ENCODE measurements at regions of chr7 and their contacts with region 1.

Region 1: GRCh38 chr7:7968543-7969305 is at the start of gene GLCCI1:
- DNase-seq: peak; percentile 99
- H3K4me3 Mint-ChIP-seq: peak within 1 kb of the TSS; percentile 86
- H3K27ac Mint-ChIP-seq: peak within 1 kb of the TSS; percentile 89
- H3K4me1 Mint-ChIP-seq: peaks cover 16% of the 10 kb centered on the region
- H3K27me3 Mint-ChIP-seq: no peaks in the 10 kb centered on the region
- total RNA-seq, gene GLCCI1: 10.1 and 10.9 TPM in 2 replicates

Region 2: DNA sequence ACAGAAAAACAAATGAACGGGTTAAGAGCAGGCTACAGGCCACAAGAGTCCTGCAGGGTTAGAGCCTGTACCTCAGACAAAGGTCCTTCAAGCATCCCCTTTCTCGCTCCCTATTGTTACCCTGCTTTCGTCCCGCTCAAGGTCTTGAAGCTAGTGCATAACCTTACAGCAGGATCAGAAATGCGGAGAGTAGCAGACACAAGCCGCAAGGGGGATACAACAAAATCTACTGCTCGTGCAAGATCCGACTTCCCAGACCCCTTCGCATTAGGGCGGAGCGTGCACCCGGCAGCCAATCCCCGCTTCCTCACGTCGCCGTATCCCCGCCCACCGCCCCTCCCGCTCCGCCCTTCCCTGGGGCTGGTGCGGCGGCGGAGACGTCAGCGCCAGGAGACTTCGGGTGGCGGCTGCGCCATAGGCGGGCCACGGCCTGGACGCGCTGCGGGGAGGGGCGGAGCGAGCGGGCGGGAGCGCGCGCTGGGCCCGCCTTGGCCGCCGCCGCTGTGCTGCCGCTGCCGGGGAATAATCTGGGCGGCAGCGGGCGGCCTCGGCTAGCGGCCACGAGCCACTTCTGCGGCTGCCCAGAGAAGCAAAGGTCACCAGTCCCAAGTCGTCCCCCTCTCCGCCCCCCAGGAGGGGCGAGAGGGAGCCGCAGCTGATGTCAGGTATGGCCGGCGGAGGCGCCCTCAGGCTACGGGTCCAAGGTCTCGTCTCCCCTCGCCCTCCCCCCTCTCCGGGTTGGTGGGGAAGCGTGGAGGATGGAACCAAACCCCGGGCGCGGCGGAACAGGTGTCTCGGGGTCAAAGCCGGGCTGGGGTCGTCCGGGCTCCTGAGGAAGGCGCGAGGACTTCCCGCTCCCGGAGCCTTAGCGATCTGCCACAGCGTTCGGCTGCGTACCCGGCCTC is 786.3 kb before region 1 on chr7 and contains the start of gene C1GALT1:
- intact Hi-C with region 1: loop called (anchors 5 kb)
- DNase-seq: peak; percentile 98
- H3K4me3 Mint-ChIP-seq: peak within 1 kb of the TSS; percentile 96
- H3K27ac Mint-ChIP-seq: peak within 1 kb of the TSS; percentile 99
- H3K4me1 Mint-ChIP-seq: peaks cover 27% of the 10 kb centered on the region
- H3K27me3 Mint-ChIP-seq: no peaks in the 10 kb centered on the region
- total RNA-seq, gene C1GALT1: 37.2 and 39.3 TPM in 2 replicates

Region 3: GRCh38 chr7:7719236-7719635 is 249.5 kb before region 1 on chr7:
- intact Hi-C with region 1: loop called (anchors 1 kb)
- DNase-seq: peak; percentile 84
- H3K4me3 Mint-ChIP-seq: peak overlapping the region; percentile 47
- H3K27ac Mint-ChIP-seq: peak overlapping the region; percentile 73
- H3K4me1 Mint-ChIP-seq: peaks cover 17% of the 10 kb centered on the region
- H3K27me3 Mint-ChIP-seq: no peaks in the 10 kb centered on the region

Region 4: DNA sequence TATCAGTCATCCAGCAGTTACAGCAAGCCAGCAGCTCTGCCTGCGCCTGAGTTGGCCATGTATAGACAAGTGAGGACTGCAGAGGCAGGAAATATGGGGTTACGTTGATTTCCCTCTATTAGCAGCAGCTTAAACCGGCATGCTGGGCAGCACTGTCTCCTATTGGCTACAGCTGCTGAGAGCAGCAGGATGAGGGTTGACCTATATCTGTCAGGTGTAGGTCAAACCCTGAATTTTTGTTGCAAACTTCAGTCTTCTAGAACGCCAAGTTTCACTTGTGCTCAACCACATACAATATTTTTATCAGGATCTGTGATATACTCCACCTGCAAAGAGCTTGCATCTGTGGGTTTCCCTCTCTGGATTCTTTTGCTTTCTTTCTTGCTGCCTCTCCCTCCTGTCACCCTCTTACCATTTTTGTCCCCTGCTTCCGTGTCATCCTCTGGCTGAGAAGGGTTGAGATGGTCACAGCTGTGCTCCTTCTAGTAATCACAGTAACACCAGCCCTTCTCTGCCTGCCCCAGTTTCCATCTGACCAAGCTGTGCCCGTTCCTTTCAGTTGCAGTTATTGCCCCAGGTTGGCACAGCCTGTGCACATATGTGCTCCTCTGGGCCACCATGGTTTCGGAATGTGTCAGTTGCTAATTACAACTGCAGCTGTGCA is 24.0 kb before region 1 on chr7:
- intact Hi-C with region 1: loop called (anchors 2 kb)
- DNase-seq: peak; percentile 80
- H3K4me3 Mint-ChIP-seq: peak overlapping the region; percentile 65
- H3K27ac Mint-ChIP-seq: peak overlapping the region; percentile 49
- H3K4me1 Mint-ChIP-seq: peaks cover 13% of the 10 kb centered on the region
- H3K27me3 Mint-ChIP-seq: no peaks in the 10 kb centered on the region

Region 5: DNA sequence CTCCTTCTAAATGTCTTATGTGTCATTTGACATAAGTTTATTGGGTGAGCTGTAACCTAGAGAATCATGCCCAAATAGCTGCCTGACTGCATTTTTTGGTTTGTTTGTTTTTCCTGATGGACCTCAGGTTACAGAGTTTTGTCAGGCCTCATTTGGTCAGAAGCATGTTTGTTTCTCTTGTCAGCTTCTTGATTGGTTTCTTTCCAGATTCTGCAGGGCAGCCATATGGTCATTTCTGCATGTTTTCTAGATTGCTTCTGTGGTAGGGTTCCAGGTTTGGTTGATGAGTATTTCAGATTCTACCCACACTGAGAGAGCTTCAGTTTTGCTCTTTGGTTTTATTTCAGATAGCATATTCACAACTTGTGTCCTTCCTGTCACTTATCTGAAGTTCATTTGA is 27.9 kb after region 1 on chr7:
- intact Hi-C with region 1: no loop called
- DNase-seq: no peak
- H3K4me3 Mint-ChIP-seq: no peak overlapping the region
- H3K27ac Mint-ChIP-seq: no peak overlapping the region
- H3K4me1 Mint-ChIP-seq: peaks cover 6% of the 10 kb centered on the region
- H3K27me3 Mint-ChIP-seq: no peaks in the 10 kb centered on the region

Region 6: DNA sequence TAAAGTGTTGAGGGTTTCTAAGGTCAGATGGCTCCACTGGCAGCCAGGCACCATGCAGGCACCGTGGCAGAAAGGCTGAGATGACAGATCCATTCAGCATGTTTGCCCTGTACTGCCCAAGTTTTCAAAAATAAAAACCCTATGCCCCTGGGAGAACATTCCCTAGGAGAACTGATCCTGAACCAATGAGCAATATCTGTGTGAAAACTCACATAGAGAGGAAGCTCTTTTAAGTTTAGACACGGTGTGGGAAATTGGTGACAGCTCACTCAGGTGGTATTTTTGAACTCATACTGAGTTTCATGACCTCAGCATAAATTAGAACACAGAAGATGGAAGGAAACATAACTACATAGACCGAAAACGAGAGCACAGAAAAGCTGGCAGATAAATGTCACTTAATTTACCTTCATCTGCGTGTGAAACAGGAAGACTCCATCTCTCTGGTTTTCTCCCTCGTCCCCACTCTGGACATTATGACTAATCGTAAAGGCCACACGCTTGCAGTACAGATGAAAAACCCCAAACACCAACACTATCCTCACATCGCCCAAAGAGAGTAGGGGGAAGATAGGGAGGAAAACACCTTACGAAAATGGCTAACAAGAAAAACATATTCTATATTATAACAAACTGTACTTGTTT is 165.5 kb after region 1 on chr7:
- intact Hi-C with region 1: loop called (anchors 2 kb)
- DNase-seq: peak; percentile 81
- H3K4me3 Mint-ChIP-seq: peak overlapping the region; percentile 42
- H3K27ac Mint-ChIP-seq: peak overlapping the region; percentile 65
- H3K4me1 Mint-ChIP-seq: peaks cover 52% of the 10 kb centered on the region
- H3K27me3 Mint-ChIP-seq: no peaks in the 10 kb centered on the region

Region 7: DNA sequence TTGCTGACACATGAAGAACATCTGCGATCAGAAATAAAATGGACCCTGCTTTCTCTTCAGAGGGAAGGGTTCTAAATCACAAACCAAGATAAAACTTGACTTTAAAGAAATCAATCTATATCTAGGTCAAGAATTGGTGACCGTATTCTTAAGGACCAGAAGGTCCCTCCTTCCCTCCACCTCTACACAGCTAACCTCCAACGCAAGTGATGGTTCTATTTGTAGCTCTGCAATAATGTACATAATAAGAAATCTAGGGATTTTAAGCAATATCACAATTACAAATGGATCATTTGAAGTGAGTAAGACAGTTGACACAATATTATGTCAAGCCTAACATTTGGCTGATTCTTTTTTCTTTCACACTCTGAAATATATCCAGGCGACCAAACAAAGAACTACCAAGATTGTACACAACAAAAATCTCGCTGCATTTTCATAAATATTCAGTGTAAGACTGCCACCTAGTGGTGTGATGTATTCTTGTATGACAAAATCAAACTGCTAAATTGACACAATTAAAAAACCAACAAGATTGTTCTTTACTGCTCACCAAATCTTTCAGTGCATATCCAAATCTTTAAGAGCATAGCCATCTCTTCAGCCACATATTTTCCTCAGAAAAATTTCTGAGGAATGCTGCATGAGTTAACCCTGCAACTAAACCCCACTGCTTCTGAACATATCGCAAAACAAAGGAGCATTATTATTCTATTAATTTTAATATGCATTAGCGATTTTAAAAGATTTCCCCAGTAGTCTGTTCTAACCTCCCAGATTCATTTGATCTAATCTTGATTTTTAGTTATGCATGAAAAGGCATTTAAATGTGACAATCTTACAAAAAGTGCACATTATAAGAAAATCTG is 248.7 kb after region 1 on chr7:
- intact Hi-C with region 1: loop called (anchors 1 kb)
- DNase-seq: peak; percentile 86
- H3K4me3 Mint-ChIP-seq: no peak overlapping the region
- H3K27ac Mint-ChIP-seq: no peak overlapping the region
- H3K4me1 Mint-ChIP-seq: peaks cover 4% of the 10 kb centered on the region
- H3K27me3 Mint-ChIP-seq: no peaks in the 10 kb centered on the region